Cardiac septum (tissue), 1 donor: ENCODE measurements at regions of chr18 and their contacts with region 1.

Region 1: GRCh38 chr18:57859314-57859713 is 56.2 kb upstream of the ATP8B1 start:
- DNase-seq: no peak

Region 2: GRCh38 chr18:57630002-57630753 is 229.1 kb before region 1 on chr18:
- intact Hi-C with region 1: loop called (anchors 10 kb)
- DNase-seq: peak; percentile 98